Esophagus muscularis mucosa (tissue), 4 donors: ENCODE measurements at regions of chr12 and their contacts with region 1.

Region 1: GRCh38 chr12:56258057-56258819 is at the start of gene ANKRD52:
- DNase-seq: no peak
- H3K4me3 ChIP-seq: peak within 1 kb of the TSS; percentile 81 to 93 (median 93)
- H3K27ac ChIP-seq: peak within 1 kb of the TSS; percentile 91 to 94 (median 93)
- H3K4me1 ChIP-seq: peaks cover 21 to 33% (median 30%) of the 10 kb centered on the region in 4 donors
- H3K27me3 ChIP-seq: no peaks in the 10 kb centered on the region
- CTCF ChIP-seq: peak; percentile 77 to 89 (median 86)
- EP300 ChIP-seq: no peak
- POLR2A ChIP-seq: no peak
- total RNA-seq, gene ANKRD52: 13.8 to 31.5 (median 19.6) TPM

Region 2: GRCh38 chr12:56178347-56178746 is 79.9 kb before region 1 on chr12:
- intact Hi-C with region 1: no loop called
- DNase-seq: no peak
- H3K4me3 ChIP-seq: no peak overlapping the region
- H3K27ac ChIP-seq: no peak overlapping the region
- H3K4me1 ChIP-seq: no peaks in the 10 kb centered on the region
- H3K27me3 ChIP-seq: no peaks in the 10 kb centered on the region
- CTCF ChIP-seq: no peak
- EP300 ChIP-seq: no peak
- POLR2A ChIP-seq: no peak

Region 3: GRCh38 chr12:56198836-56199235 is 59.4 kb before region 1 on chr12:
- intact Hi-C with region 1: loop called (anchors 5 kb)
- DNase-seq: no peak
- H3K4me3 ChIP-seq: no peak overlapping the region
- H3K27ac ChIP-seq: no peak overlapping the region
- H3K4me1 ChIP-seq: peaks cover 0 to 8% (median 5%) of the 10 kb centered on the region in 4 donors
- H3K27me3 ChIP-seq: no peaks in the 10 kb centered on the region
- CTCF ChIP-seq: no peak
- EP300 ChIP-seq: no peak
- POLR2A ChIP-seq: no peak